G401 (cell line): ENCODE measurements at regions of chr20 and their contacts with region 1.

Region 1: DNA sequence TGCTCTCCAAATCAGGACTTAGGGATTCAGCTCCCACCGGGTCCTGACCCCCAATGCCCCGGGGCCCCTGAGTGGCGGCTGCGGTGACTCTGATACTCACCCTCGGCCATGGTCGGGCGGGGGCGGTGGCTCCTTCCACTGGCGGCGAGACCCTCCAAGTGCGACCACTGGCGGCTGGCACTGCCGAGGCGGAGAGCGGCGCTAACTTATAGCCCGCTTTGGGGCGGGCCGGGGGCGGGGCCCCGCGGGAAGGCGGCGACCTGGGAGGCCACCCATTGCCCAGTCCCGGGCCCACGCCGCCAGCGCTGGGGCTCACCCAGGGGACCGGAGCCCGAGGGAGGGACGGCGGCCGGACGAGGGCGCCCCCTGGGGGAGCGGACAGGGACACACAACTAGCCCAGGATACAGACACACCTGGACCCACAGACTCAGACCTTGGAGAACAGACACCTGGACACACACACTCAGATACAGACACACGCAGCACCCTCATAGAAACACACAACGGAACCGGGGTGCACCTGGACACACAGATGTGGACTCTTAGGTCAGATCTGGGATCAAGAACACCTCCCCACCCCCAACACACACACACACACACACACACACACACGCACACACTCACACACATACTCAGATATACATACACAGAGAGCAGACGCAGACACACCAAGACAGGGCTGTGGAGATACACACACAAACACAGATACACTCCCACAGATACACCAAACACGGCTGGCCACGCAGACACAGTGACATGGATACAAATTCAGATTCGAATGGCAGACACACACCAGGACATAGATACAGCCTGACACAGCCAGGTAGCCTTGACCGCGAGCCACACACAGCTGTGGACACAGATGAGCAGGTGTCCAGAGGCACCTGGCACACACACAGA is at the start of gene TGM2:
- DNase-seq: peak; percentile 14
- total RNA-seq, gene TGM2: 13.1 and 23.4 TPM in 2 replicates

Region 2: DNA sequence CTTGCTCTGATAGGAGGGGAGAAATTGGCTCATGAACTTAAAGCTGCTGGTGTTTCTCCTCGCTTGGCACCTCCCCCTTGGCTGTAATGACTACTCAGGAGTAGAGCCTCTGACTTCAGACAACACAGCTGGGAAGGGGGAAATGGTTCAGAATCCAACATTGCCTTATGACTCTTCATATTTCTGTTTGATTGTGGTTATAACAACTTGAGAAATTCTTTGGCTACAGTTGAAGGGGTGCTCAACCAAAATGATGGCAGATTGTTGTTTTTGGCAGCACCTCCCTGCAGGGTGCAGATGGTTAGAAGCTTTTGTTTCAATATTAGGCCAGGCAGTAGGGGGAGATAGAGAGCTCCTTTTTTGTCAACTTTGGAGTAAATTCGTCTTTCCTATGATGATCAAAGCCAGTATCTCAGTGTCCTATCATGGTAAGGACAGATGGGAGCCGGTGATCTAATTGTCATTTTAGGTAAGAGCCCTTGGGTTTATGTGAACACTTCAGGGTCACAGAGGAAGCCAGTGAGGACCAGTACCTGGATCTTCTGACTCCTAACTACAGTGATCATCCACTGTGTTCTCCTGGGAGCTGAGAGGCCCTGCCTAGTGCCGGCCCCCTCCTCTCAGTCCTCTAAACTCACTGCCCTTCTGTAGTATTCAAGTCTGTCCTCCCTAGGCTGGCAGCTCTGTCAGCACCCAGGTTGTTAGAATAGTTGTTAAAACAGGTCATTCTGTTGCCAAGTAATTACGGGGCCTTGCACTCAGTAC is 91.8 kb before region 1 on chr20:
- in situ Hi-C with region 1: loop called (anchors 5 kb)
- DNase-seq: peak; percentile 73

Region 3: DNA sequence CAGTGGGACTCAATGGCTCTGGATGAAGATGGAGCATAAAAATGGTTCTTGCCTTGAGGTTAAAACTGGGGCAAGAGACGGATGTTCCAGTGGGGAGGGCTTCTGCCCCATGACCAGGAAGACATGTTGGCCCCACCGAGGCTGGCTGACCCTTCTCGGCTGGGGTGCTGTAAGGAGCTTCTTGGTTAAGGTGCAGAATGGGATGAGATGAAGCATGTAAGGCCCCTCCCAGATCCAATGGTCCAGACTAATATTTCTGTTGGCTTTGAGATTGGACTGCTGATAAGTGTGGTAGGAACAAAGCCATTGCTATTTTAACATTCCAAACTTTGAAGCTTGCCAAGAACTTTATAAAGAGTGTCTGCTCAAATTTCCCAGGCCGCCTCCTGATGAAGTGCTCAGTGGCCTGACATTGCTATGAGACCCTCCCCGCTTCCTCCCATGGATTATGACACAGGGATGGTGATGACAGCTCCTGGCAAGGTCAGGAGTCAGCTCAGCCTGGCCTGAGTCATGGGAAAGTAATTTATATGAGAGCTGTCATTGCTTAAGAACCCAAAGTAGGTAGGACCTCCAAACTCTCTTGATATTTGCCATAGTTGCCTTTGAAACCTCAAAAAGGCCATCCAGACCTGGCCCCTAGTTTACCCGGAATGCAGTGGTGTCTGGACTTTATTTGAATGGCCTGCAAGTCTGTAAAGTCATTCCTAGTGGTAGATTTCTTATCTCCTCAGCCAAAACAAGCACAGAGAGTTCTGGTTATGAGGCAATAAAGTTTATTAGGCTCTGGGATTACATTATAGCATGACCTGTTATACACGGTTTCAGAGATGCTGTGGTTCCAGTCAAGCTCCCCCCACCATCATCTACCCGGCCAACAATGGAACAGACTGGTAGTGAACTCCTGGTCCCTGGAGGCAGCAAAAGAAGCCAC is 55.5 kb before region 1 on chr20:
- in situ Hi-C with region 1: no loop called
- DNase-seq: no peak